Posterior vena cava (tissue), 2 donors: ENCODE measurements at regions of chr5 and their contacts with region 1.

Region 1: DNA sequence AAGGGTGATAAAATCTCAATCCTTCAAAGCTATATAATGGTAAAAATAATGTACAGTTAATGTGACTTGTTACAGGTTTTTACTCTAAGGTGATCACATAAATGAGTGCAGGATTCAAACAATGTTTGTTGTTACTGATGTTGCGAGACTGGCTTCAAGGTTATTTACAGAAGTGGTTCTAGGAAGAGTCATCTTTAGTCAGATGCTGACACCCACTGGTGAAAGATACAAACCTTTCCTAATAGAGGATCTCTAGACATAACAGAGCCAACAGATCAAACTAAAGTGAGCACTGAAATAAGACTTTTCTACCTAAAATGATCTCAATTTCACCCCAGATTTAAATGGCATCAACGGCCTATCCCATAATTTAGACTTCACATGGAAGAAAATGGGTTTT is 20.2 kb downstream of the ARSB start:
- DNase-seq: no peak

Region 2: GRCh38 chr5:78320401-78320800 is 644.5 kb before region 1 on chr5:
- intact Hi-C with region 1: loop called in 1 of 2 experiments (anchors 10 kb)
- DNase-seq: no peak

Region 3: GRCh38 chr5:78367318-78367991 is 597.4 kb before region 1 on chr5:
- intact Hi-C with region 1: no loop called
- DNase-seq: no peak

Region 4: DNA sequence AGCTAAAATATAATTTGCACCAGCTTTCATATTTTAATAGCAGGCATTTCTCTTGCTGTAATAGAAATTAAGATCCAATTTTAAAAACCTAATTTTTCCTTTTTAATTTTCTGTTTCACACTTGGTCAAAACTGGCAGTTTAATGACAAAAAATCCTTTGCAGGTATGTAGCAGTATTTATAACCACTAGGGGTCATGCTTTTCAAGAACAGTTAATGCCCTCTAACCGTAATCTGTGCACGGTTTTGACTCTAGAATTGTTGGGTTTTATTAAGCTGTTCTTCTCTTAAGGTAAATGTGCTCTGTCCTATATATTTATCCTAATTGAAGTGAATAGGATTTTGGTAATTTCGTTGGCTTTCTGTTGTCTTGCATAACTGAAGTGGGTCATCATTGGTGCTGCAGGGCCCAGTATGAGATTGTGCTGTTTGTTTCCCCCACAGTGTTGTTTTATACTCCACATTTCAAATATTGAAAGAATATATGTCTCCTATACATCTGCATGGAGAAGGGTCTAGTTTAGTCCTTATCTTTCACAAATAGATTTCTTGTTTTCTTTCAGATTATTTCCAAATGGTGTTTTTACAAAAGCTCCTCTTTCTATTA is 497.0 kb before region 1 on chr5:
- intact Hi-C with region 1: loop called in 1 of 2 experiments (anchors 10 kb)
- DNase-seq: no peak